Dorsolateral prefrontal cortex (tissue), 120 donors: ENCODE measurements at regions of chr12 and their contacts with region 1.

Region 1: GRCh38 chr12:121443193-121443870 is 43.4 kb downstream of the RNF34 start:
- DNase-seq: peak; percentile 75 to 92 (median 88)
- H3K4me3 ChIP-seq: peak overlapping the region in 4 of 59 donors; percentile 3 to 31 (median 6)
- H3K27ac ChIP-seq: peak overlapping the region in 52 of 59 donors; percentile 3 to 91 (median 80)
- H3K27me3 ChIP-seq: no peaks in the 10 kb centered on the region
- CTCF ChIP-seq: peak; percentile 67 to 95 (median 87)

Region 2: DNA sequence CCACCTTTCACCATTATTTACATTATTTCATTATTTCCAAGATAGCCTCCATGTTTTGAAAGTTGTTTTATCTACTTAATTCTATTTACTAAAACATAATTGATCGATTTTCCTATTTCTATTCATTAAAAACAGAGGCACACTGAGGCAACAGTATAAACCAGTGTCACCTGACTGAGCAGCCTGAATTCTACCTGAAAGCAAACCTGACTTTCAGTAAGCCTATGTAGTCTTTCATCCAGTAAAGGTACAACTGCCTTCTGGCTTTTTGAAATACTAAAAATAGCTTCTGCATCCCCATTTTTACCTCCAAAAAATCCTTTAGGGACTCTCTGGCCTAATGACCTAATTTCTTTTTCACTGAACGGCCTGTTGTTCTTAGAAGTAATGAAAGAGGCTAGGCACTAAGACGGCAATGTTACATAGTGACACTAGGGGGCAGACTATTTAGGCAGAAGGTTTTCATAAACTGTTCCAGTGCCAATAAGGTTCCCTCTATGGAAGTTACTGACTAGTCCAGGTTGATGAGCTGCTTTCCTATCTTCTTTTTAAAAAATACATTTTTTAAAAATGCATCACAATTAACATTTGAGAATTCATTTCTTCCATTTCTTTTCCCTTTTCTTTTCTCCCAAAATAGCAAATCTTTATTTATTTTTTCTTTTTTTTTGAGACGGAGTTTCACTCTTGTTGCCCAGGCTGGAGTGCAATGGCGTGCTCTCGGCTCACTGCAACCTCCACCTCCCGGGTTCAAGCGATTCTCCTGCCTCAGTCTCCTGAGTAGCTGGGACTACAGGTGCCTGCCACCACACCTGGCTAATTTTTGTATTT is 108.6 kb before region 1 on chr12:
- intact Hi-C with region 1: loop called (anchors 5 kb)
- DNase-seq: peak in 1 of 10 donors; percentile 17
- H3K4me3 ChIP-seq: peak overlapping the region in 1 of 59 donors; percentile 9
- H3K27ac ChIP-seq: peak overlapping the region in 33 of 59 donors; percentile 4 to 77 (median 47)
- H3K27me3 ChIP-seq: no peaks in the 10 kb centered on the region
- CTCF ChIP-seq: peak; percentile 73 to 97 (median 88)

Region 3: DNA sequence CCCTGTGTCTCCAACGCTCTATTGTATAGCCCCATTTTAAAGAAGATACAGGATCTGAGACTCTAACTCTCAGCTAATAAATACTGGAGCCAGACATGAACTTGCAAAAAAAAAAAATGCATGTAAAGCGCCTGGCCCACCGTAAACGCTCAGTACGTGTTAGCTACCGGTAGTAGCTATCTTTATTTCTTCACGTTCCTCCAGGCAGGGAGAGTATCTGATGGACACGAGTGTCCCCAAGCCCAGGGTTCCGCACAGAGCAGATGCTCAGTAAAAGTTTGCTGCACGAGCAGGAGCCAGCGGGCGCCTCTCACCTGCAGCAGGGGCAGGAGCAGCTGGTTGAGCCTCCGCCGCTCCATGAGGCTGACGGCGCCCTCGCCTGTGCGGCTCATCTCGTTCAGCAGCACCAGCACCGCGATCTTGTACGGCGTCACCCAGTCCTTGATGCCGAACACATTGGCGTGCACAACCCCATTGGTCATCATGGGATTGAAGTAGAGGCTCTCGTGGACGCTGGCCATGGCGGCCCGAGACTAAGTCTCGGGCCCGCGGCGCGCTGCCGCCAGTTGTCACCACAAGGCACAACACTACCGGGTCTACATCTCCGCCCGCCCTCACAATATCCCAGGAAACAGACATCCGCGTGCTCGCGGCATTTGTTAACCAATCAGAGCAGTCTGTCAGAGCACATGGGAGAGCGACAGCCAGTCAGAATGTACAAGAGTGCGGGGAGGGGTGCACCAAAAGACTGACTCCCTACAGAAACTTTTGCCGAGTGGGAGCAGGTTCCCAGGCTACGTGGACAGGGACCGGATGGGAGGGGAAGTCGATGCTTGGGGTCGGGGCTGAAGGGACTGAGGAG is 91.3 kb before region 1 on chr12 and contains the start of gene ANAPC5:
- intact Hi-C with region 1: loop called (anchors 5 kb)
- DNase-seq: peak; percentile 86 to 99 (median 96)
- H3K4me3 ChIP-seq: peak within 1 kb of the TSS; percentile 53 to 99 (median 94)
- H3K27ac ChIP-seq: peak within 1 kb of the TSS in 58 of 59 donors; percentile 3 to 94 (median 84)
- H3K27me3 ChIP-seq: no peaks in the 10 kb centered on the region
- CTCF ChIP-seq: peak in 43 of 56 donors; percentile 19 to 63 (median 33)
- total RNA-seq, gene ANAPC5: 108 to 272 (median 159) TPM